Lower leg skin (tissue), 4 donors: ENCODE measurements at regions of chr12 and their contacts with region 1.

Region 1: GRCh38 chr12:91326058-91327027 is 143.7 kb upstream of the DCN start:
- DNase-seq: peak in 1 of 2 donors; percentile 81
- H3K4me3 ChIP-seq: no peak overlapping the region
- CTCF ChIP-seq: no peak
- POLR2A ChIP-seq: no peak

Region 2: GRCh38 chr12:91178139-91178561 is 148.2 kb before region 1 on chr12:
- intact Hi-C with region 1: loop called (anchors 10 kb)
- DNase-seq: no peak
- H3K4me3 ChIP-seq: peak overlapping the region; percentile 28
- CTCF ChIP-seq: no peak
- POLR2A ChIP-seq: no peak

Region 3: GRCh38 chr12:91663310-91663709 is 337.0 kb after region 1 on chr12:
- intact Hi-C with region 1: no loop called
- DNase-seq: no peak
- H3K4me3 ChIP-seq: no peak overlapping the region
- CTCF ChIP-seq: no peak
- POLR2A ChIP-seq: no peak